Activated CD4-positive, alpha-beta T cell treated with anti-CD3 and anti-CD28 coated beads for 36 hours (primary cell): ENCODE measurements at regions of chr3 and their contacts with region 1.

Region 1: DNA sequence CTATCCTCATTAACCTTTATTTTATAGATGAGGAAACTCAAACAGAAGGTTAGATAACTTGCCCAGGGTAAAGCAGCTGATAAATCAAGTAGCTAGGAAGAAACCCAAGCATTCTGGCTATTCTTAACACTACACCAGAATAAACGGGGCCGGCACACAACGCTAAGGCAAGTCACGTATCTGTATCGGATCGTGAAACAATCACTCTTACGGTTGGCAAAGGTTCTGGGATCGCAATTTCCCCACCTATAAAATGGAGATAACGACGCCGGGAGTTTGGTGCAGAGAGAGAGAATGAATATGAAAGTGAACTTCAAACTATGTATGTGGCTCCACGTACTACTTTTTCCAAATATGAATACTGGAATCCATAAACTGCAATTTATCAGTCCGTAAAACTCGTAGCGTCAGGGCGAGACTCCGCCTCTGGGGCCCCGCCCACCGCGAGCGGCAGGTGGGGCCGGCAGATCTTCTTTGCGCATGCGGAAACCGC is 252 bp upstream of the ARMC8 start:
- DNase-seq: peak; percentile 94
- ATAC-seq: peak; percentile 96
- H3K4me3 Mint-ChIP-seq: peak overlapping the region; percentile 81
- H3K27ac Mint-ChIP-seq: peak overlapping the region; percentile 93
- H3K4me1 Mint-ChIP-seq: peaks cover 28% of the 10 kb centered on the region
- H3K27me3 Mint-ChIP-seq: peaks cover 3% of the 10 kb centered on the region

Region 2: DNA sequence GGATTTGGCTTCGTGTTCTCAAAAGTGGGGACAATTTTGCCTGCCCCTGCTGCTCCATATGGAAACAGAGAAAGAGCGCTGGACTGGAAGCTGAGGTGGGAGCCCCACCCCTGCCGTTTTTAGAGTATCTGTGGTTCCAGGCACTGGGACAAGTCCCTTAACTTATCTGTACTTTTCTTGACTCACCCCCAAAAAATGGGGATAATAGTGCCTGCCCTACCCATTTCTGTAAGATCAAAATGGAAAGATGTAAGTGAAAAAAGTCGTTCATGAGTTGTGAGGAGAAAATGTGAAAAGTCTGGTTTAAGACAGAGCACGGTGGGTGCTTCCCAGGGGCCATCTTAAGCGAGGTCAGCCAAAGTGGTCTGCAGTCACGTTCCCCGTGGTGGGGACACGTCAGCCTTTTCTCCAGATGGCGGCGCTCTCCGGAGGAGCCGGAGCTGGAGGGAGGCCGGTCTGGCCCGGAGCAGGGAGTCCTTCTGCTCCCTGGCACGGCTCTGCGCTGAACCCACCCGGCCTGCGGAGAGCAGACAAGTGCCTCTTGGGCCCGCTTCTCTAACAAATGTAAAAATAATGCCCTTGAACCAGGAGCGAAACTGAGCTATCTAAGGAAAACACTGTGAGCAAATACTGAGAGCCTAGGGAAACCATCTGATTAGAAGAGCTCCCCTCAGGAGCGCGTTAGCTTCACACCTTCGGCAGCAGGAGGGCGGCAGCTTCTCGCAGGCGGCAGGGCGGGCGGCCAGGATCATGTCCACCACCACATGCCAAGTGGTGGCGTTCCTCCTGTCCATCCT is 177.2 kb before region 1 on chr3 and contains the start of gene CLDN18:
- CTCF ChIA-PET with region 1: no interaction called
- POLR2A ChIA-PET with region 1: no interaction called
- intact Hi-C with region 1: no loop called
- DNase-seq: no peak
- ATAC-seq: no peak
- H3K4me3 Mint-ChIP-seq: no peak within 1 kb of the TSS
- H3K27ac Mint-ChIP-seq: no peak within 1 kb of the TSS
- H3K4me1 Mint-ChIP-seq: no peaks in the 10 kb centered on the region
- H3K27me3 Mint-ChIP-seq: peaks cover 10% of the 10 kb centered on the region
- total RNA-seq, gene CLDN18: not detected

Region 3: DNA sequence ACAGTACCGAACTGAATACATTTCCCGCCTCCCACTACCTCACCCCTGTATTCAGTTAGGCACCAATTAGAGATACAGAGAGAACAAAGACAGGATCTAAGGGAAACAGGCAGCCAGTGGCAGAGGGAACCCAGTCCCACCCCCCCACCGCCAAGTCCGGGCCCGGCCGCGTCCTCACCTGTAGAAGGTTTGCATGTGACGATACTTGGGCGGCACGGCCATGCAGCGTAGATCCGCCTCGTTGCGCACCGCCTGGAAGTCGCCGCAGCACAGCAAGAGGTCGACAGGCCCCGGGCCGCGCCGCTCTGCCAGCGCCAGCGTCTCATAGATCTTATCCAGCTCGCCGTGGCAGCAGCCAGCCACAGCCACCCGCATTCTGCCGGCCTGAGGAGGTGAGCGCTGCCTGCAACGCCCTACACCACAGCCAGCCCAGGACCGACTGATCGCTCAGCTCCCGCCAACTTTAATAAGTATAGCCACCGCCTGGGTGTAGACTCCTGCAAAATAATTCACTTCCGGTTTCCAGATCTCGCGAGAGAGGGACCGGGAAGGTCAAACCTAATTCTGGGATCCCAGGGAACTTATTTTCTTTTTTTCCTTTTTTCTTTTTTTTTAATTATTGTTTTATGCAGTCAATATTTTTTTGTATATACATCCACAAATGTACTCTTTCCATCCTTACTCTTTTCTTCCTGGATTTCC is 12.3 kb before region 1 on chr3 and contains the start of gene DBR1:
- CTCF ChIA-PET with region 1: interaction called, 38 read pairs
- POLR2A ChIA-PET with region 1: interaction called, 25 read pairs
- intact Hi-C with region 1: loop called (anchors 1 kb)
- DNase-seq: peak; percentile 85
- ATAC-seq: peak; percentile 85
- H3K4me3 Mint-ChIP-seq: peak within 1 kb of the TSS; percentile 89
- H3K27ac Mint-ChIP-seq: peak within 1 kb of the TSS; percentile 96
- H3K4me1 Mint-ChIP-seq: peaks cover 30% of the 10 kb centered on the region
- H3K27me3 Mint-ChIP-seq: no peaks in the 10 kb centered on the region
- total RNA-seq, gene DBR1: 16.4 to 22.0 TPM

Region 4: DNA sequence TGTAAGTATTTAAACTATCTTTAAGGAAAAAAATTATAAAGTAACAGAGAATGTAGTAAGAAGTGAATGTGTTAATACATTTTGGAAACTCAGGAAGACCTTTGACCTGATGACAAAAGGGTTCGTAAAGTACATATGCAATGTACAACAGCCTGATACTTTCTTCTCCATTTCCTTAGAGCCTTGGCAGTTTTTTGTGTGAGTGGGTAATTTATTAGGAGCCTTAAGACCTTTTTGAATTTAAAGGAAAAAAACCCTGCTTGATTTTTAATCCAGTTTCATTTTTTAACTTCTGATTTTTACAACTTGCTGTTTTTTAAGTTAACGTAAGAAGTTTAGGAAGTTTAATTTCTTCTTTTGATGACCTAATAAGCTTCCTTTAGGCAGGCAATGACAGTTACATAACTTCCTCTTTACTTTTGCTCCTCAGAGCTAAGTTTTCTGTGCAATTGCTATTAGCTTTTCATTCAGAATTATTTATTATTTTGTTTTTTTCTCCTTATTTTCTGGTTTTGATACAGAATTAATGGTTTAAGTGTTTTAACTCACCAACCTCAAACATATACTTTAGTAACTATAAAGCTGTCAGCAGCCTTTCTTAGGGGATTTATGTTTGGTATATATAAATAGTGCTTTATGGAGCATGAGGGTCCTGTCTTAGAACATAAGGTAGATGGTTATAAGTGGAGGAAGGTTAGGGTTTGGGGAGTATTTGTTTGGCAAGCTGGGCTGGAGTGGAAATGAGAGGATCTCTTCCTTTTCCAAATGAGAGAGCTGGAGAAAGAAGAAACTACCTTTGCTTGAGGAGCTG is 35.5 kb after region 1 on chr3:
- CTCF ChIA-PET with region 1: interaction called, 3 read pairs
- POLR2A ChIA-PET with region 1: no interaction called
- intact Hi-C with region 1: loop called in 1 of 2 experiments (anchors 5 kb)
- DNase-seq: no peak
- ATAC-seq: no peak
- H3K4me3 Mint-ChIP-seq: no peak overlapping the region
- H3K27ac Mint-ChIP-seq: peak overlapping the region; percentile 10
- H3K4me1 Mint-ChIP-seq: peaks cover 26% of the 10 kb centered on the region
- H3K27me3 Mint-ChIP-seq: no peaks in the 10 kb centered on the region

Region 5: GRCh38 chr3:138329127-138329983 is 142.5 kb after region 1 on chr3 and contains the start of gene NME9:
- CTCF ChIA-PET with region 1: interaction called, 3 read pairs
- POLR2A ChIA-PET with region 1: no interaction called
- intact Hi-C with region 1: loop called (anchors 1 kb)
- DNase-seq: peak; percentile 93
- ATAC-seq: peak; percentile 90
- H3K4me3 Mint-ChIP-seq: peak within 1 kb of the TSS; percentile 76
- H3K27ac Mint-ChIP-seq: peak within 1 kb of the TSS; percentile 84
- H3K4me1 Mint-ChIP-seq: peaks cover 30% of the 10 kb centered on the region
- H3K27me3 Mint-ChIP-seq: no peaks in the 10 kb centered on the region
- total RNA-seq, gene NME9: 0.46 to 0.65 TPM

Region 6: DNA sequence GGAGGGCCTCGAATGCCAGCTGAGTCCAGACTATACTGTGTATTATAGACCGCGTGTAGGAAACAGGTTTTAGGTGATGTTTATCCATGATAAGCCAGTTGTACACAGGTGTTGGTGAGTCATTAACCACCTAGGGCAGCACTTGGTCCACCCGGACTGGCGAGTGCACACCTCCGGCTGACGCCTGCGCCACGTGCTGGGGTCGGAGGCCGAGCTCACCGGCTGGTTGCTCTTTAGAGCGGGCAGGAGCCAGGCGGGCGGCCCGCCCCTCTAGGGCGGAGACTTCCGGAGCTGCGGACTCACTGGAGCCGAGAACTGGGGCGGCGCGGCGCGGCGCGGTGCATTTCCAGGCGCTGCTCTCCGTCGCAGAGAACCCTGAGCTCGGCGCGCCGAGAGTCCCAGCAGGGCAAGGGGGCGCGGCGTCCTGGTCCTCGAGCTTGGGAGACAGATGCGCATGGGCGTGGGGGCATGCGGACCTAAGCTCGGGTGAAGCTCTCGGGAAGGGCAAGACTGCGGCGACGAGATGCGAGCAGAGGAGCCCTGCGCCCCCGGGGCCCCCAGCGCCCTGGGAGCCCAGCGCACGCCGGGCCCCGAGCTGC is 247.5 kb after region 1 on chr3 and contains the start of gene ESYT3:
- CTCF ChIA-PET with region 1: no interaction called
- POLR2A ChIA-PET with region 1: no interaction called
- intact Hi-C with region 1: loop called (anchors 5 to 10 kb)
- DNase-seq: peak; percentile 83
- ATAC-seq: peak; percentile 97
- H3K4me3 Mint-ChIP-seq: peak within 1 kb of the TSS; percentile 63
- H3K27ac Mint-ChIP-seq: no peak within 1 kb of the TSS
- H3K4me1 Mint-ChIP-seq: peaks cover 5% of the 10 kb centered on the region
- H3K27me3 Mint-ChIP-seq: peaks cover 43% of the 10 kb centered on the region
- total RNA-seq, gene ESYT3: 0.21 to 0.37 TPM

Region 7: GRCh38 chr3:139343895-139344856 is 1157.3 kb after region 1 on chr3 and contains the start of gene MRPS22:
- CTCF ChIA-PET with region 1: no interaction called
- POLR2A ChIA-PET with region 1: no interaction called
- intact Hi-C with region 1: loop called in 1 of 2 experiments (anchors 5 kb)
- DNase-seq: peak; percentile 90
- ATAC-seq: peak; percentile 97
- H3K4me3 Mint-ChIP-seq: peak within 1 kb of the TSS; percentile 58
- H3K27ac Mint-ChIP-seq: peak within 1 kb of the TSS; percentile 85
- H3K4me1 Mint-ChIP-seq: peaks cover 10% of the 10 kb centered on the region
- H3K27me3 Mint-ChIP-seq: no peaks in the 10 kb centered on the region
- total RNA-seq, gene MRPS22: 72.4 to 80.6 TPM